BJ (cell line): ENCODE measurements at regions of chr17 and their contacts with region 1.

Region 1: GRCh38 chr17:73311781-73312641 is at the start of gene CDC42EP4:
- DNase-seq: peak; percentile 68
- H3K4me3 ChIP-seq: peak within 1 kb of the TSS; percentile 99
- H3K27me3 ChIP-seq: no peaks in the 10 kb centered on the region
- CTCF ChIP-seq: no peak
- polyA plus RNA-seq, gene CDC42EP4: 19.6 and 28.0 TPM in 2 replicates

Region 2: GRCh38 chr17:73342050-73342522 is 30.1 kb after region 1 on chr17:
- CTCF ChIA-PET with region 1: interaction called, 21 read pairs
- POLR2A ChIA-PET with region 1: no interaction called
- DNase-seq: no peak
- H3K4me3 ChIP-seq: no peak overlapping the region
- H3K27me3 ChIP-seq: no peaks in the 10 kb centered on the region
- CTCF ChIP-seq: no peak